T-cell (primary cell): ENCODE measurements at regions of chr3 and their contacts with region 1.

Region 1: DNA sequence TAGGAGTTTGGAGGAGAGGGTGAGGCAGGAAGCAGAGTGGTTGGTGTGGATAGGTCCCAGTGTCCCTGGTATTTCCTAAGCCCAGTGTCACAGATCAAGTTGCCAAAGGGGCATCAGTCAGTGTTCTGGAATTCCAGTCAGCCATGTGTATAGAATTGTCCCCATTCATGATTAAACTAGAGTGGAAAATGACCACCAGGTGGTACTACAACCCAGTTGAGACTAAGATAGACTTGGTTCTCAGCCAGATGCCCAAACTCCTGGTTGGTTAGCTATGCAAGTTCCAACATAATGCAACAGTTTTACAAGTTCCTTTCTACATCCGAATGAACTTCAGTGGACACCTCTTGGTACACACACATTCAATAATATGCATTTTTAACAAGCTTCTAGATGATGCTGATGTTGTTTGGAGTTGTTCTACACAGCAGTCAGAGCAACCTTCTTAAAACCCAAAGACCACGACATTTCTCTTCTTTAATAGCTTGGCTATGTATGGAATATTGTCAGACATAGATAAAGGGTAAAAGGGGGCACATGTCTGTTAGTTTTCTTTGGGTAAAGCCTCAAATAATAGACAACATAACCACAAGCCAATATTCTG is 8.4 kb upstream of the ATR start:
- DNase-seq: peak in 11 of 35 experiments; percentile 5 to 71 (median 16)
- ATAC-seq: peak; percentile 58 to 79 (median 74)
- H3K4me3 ChIP-seq: no peak overlapping the region
- H3K4me3 Mint-ChIP-seq: no peak overlapping the region
- H3K27ac ChIP-seq: no peak overlapping the region
- H3K27ac Mint-ChIP-seq: no peak overlapping the region
- H3K4me1 ChIP-seq: no peaks in the 10 kb centered on the region
- H3K4me1 Mint-ChIP-seq: no peaks in the 10 kb centered on the region
- H3K27me3 ChIP-seq: peaks cover 0 to 11% of the 10 kb centered on the region in 2 experiments
- H3K27me3 Mint-ChIP-seq: peaks cover 14% of the 10 kb centered on the region in 2 donors

Region 2: GRCh38 chr3:142394921-142395622 is 191.8 kb before region 1 on chr3:
- CTCF ChIA-PET with region 1: no interaction called
- POLR2A ChIA-PET with region 1: no interaction called
- DNase-seq: no peak
- ATAC-seq: no peak
- H3K4me3 ChIP-seq: no peak overlapping the region
- H3K4me3 Mint-ChIP-seq: no peak overlapping the region
- H3K27ac ChIP-seq: no peak overlapping the region
- H3K27ac Mint-ChIP-seq: no peak overlapping the region
- H3K4me1 ChIP-seq: no peaks in the 10 kb centered on the region
- H3K4me1 Mint-ChIP-seq: no peaks in the 10 kb centered on the region
- H3K27me3 ChIP-seq: no peaks in the 10 kb centered on the region
- H3K27me3 Mint-ChIP-seq: no peaks in the 10 kb centered on the region

Region 3: DNA sequence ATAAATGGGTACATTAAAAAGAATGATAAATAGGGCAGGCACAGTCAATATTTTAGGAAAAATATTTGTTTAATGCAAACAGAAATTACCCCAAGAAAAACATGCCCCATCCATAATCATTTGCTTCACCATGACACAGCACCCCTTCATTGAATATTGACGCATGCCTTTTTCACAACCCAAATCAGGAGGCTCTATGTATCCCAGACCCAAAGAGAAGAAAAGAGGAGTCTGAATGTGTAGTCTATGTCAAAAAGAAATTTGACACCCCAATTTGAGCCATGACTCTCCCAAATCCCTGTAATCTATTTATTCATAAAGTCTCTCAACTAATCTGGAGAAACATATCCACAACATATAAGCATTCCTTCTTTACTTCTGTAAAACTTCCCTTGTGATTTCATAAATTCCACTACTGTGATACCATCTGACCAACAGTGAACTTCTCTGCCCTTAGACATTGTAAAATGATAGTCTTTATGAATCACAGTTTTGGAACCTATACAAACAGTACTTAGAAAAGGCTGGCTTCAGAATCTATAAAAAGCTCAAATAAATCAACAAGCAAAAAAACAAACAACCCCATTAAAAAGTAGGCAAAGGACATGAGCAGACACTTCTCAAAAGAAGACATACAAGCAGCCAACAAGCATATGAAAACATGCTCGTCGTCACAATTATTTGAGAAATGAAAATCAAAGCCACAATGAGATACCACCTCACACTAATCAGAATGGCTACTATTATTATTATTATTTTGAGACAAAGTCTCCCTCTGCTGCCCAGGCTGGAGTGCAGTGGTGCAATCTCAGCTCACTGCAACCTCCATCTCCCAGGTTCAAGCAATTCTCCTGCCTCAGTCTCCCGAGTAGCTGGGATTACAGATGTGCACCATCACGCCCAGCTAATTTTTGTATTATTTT is 85.6 kb before region 1 on chr3:
- CTCF ChIA-PET with region 1: interaction called in 1 of 2 experiments, 11 read pairs
- POLR2A ChIA-PET with region 1: interaction called in 1 of 2 experiments, 3 read pairs
- DNase-seq: no peak
- ATAC-seq: no peak
- H3K4me3 ChIP-seq: no peak overlapping the region
- H3K4me3 Mint-ChIP-seq: no peak overlapping the region
- H3K27ac ChIP-seq: no peak overlapping the region
- H3K27ac Mint-ChIP-seq: peak overlapping the region in 1 of 2 donors; percentile 11
- H3K4me1 ChIP-seq: no peaks in the 10 kb centered on the region
- H3K4me1 Mint-ChIP-seq: no peaks in the 10 kb centered on the region
- H3K27me3 ChIP-seq: no peaks in the 10 kb centered on the region
- H3K27me3 Mint-ChIP-seq: no peaks in the 10 kb centered on the region

Region 4: DNA sequence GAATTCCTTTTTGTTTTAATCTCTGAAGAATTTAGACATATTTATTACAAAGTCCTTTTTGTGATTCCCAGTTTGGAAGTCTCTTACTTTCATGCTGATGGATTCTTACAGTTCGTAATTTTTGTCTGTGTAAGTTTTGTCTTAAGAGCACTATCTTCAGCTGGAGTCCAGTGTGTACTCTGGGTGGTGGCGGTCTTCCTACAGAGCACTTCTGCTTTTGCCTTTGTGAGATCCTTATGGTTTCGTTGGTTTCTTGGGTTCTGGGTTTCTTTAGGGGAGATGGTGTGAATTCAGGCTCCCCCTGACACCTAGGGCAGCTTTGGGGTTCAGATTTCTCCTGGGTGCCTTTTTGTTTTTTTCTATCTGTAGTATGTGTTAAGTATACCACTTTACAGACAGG is 54.6 kb after region 1 on chr3:
- CTCF ChIA-PET with region 1: no interaction called
- POLR2A ChIA-PET with region 1: no interaction called
- DNase-seq: no peak
- ATAC-seq: no peak
- H3K4me3 ChIP-seq: no peak overlapping the region
- H3K4me3 Mint-ChIP-seq: no peak overlapping the region
- H3K27ac ChIP-seq: no peak overlapping the region
- H3K27ac Mint-ChIP-seq: no peak overlapping the region
- H3K4me1 ChIP-seq: no peaks in the 10 kb centered on the region
- H3K4me1 Mint-ChIP-seq: no peaks in the 10 kb centered on the region
- H3K27me3 ChIP-seq: no peaks in the 10 kb centered on the region
- H3K27me3 Mint-ChIP-seq: no peaks in the 10 kb centered on the region

Region 5: GRCh38 chr3:143016321-143016972 is 429.5 kb after region 1 on chr3:
- CTCF ChIA-PET with region 1: interaction called in 1 of 2 experiments, 6 read pairs
- POLR2A ChIA-PET with region 1: interaction called in 1 of 2 experiments, 12 read pairs
- DNase-seq: peak in 1 of 35 experiments; percentile 34
- ATAC-seq: no peak
- H3K4me3 ChIP-seq: no peak overlapping the region
- H3K4me3 Mint-ChIP-seq: no peak overlapping the region
- H3K27ac ChIP-seq: no peak overlapping the region
- H3K27ac Mint-ChIP-seq: no peak overlapping the region
- H3K4me1 ChIP-seq: no peaks in the 10 kb centered on the region
- H3K4me1 Mint-ChIP-seq: peaks cover 13 to 18% (median 17%) of the 10 kb centered on the region in 3 donors
- H3K27me3 ChIP-seq: no peaks in the 10 kb centered on the region
- H3K27me3 Mint-ChIP-seq: no peaks in the 10 kb centered on the region